Activated CD8-positive, alpha-beta T cell treated with anti-CD3 and anti-CD28 coated beads, Interleukin-2, amount 10 ng/mL, durations not matched to agents 7 days and 5 days (primary cell): ENCODE measurements at regions of chr11 and their contacts with region 1.

Region 1: DNA sequence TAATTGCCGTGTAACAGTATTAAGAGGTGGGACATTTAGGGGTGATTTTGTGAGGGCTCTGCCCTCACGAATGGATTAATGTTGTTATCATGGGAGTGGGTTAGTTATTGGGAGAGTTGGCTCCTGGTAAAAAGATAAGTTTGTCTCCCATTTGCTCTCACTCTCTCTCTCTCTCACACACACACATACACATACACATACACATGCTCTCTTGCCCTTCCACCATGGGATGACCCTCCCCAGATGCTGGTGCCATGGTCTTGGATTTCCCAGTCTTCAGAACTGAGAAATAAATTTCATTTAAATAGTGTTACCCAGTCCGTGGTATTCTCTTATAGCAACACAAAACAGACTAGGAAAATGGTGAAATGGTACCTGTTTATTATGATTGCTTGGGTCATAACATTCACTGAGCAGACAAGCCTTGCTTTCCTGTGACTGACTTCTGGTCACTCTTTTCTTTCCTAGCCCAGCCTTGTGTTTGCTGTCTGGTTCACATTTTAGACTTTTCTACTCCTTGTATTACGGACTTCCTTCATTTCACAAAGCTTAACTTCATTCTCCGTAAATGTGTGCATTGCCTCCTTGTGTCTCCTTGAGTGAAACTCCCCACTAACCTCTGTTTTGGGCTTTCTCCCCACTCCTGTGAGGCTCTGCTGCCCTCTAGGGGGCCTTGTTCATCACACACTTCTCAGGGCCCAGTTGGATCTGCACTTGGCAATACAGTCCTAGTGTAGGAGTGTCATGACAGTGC is 206.5 kb upstream of the CTSC start:
- DNase-seq: peak; percentile 89
- ATAC-seq: peak; percentile 100
- H3K4me3 Mint-ChIP-seq: no peak overlapping the region
- H3K27ac Mint-ChIP-seq: peak overlapping the region; percentile 1
- H3K4me1 Mint-ChIP-seq: peaks cover 7% of the 10 kb centered on the region
- H3K27me3 Mint-ChIP-seq: peaks cover 4% of the 10 kb centered on the region

Region 2: GRCh38 chr11:88016392-88017170 is 527.5 kb before region 1 on chr11:
- CTCF ChIA-PET with region 1: interaction called, 58 read pairs
- POLR2A ChIA-PET with region 1: no interaction called
- DNase-seq: peak; percentile 74
- ATAC-seq: peak; percentile 78
- H3K4me3 Mint-ChIP-seq: no peak overlapping the region
- H3K27ac Mint-ChIP-seq: no peak overlapping the region
- H3K4me1 Mint-ChIP-seq: no peaks in the 10 kb centered on the region
- H3K27me3 Mint-ChIP-seq: no peaks in the 10 kb centered on the region

Region 3: GRCh38 chr11:88231894-88232482 is 312.1 kb before region 1 on chr11:
- CTCF ChIA-PET with region 1: interaction called, 15 read pairs
- POLR2A ChIA-PET with region 1: no interaction called
- DNase-seq: peak; percentile 38
- ATAC-seq: peak; percentile 44
- H3K4me3 Mint-ChIP-seq: no peak overlapping the region
- H3K27ac Mint-ChIP-seq: no peak overlapping the region
- H3K4me1 Mint-ChIP-seq: no peaks in the 10 kb centered on the region
- H3K27me3 Mint-ChIP-seq: no peaks in the 10 kb centered on the region

Region 4: DNA sequence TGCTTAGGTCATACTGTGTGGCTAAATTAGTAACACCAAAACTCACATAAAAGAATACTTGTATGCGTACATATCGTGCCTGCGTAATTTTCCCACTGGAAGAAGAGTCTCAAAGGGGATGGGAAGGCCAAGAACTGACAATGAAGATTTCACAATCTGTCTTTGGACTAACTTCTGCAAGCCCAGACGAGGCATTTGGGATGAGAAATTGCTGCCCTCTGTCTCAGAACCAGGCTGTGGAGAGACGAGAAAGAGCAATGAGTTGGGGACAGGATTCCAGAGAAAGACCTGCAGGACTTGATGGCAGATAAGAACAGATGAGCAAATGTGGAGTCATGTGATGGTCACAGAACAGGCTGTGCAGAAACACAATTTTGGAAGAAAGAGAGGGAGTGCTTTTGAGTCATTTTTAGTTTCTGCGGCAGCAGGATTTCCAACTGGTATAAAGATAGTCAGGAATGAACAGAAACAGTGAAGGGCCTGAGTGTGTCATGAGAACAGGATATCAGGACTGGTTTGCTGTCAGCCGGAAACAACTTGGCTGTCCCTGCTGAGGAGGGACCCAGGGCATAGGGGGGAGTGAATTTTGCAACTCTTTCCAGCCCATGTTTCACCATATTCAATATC is 123.8 kb before region 1 on chr11:
- CTCF ChIA-PET with region 1: no interaction called
- POLR2A ChIA-PET with region 1: no interaction called
- DNase-seq: no peak
- ATAC-seq: no peak
- H3K4me3 Mint-ChIP-seq: no peak overlapping the region
- H3K27ac Mint-ChIP-seq: peak overlapping the region; percentile 91
- H3K4me1 Mint-ChIP-seq: peaks cover 85% of the 10 kb centered on the region
- H3K27me3 Mint-ChIP-seq: no peaks in the 10 kb centered on the region

Region 5: DNA sequence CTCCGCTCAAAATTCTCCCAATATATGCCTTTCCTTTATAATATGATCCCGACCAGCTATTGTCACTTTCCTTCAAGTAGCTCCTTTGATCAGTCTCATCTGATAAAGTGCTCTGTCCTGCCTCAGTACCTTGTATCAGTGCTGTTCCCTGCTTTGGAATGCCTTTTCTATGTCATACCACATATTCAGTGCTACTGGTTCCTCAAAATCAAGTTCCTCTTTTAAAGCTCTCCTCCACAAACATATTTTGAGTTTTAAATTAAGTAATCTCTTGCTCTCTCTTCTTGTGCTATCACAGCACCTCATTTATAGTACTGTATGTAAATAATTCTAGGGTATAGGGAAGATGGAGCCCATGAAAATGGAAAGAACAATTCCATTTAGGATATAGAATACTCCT is 69.4 kb before region 1 on chr11:
- CTCF ChIA-PET with region 1: no interaction called
- POLR2A ChIA-PET with region 1: no interaction called
- DNase-seq: no peak
- ATAC-seq: no peak
- H3K4me3 Mint-ChIP-seq: no peak overlapping the region
- H3K27ac Mint-ChIP-seq: no peak overlapping the region
- H3K4me1 Mint-ChIP-seq: no peaks in the 10 kb centered on the region
- H3K27me3 Mint-ChIP-seq: peaks cover 9% of the 10 kb centered on the region